ENCODE measurements at regions of chr10 and their contacts with region 1.

Region 1: GRCh38 chr10:21604651-21605050 is 70.6 kb downstream of the MLLT10 start:
- DNase-seq: no peak
- H3K4me3 Mint-ChIP-seq: no peak overlapping the region
- H3K27ac Mint-ChIP-seq: no peak overlapping the region
- H3K4me1 Mint-ChIP-seq: peaks cover 25% of the 10 kb centered on the region
- H3K27me3 Mint-ChIP-seq: no peaks in the 10 kb centered on the region

Region 2: GRCh38 chr10:21572578-21572977 is 32.1 kb before region 1 on chr10:
- intact Hi-C with region 1: loop called (anchors 5 kb)
- DNase-seq: no peak
- H3K4me3 Mint-ChIP-seq: no peak overlapping the region
- H3K27ac Mint-ChIP-seq: no peak overlapping the region
- H3K4me1 Mint-ChIP-seq: peaks cover 18% of the 10 kb centered on the region
- H3K27me3 Mint-ChIP-seq: no peaks in the 10 kb centered on the region

Measured in activated T-helper 1 cell treated with anti-CD3 and anti-CD28 coated beads, Interleukin-12 subunit alpha, Interleukin-12 subunit beta, Interleukin-2, Interleukin-4 antibody, amounts not matched to agents 30 ng/mL and 10 ng/mL and 1 ng/mL, durations not matched to agents 14 hours and 24 hours and 36 hours (primary cell).